ENCODE measurements at regions of chr20 and their contacts with region 1.

Region 1: DNA sequence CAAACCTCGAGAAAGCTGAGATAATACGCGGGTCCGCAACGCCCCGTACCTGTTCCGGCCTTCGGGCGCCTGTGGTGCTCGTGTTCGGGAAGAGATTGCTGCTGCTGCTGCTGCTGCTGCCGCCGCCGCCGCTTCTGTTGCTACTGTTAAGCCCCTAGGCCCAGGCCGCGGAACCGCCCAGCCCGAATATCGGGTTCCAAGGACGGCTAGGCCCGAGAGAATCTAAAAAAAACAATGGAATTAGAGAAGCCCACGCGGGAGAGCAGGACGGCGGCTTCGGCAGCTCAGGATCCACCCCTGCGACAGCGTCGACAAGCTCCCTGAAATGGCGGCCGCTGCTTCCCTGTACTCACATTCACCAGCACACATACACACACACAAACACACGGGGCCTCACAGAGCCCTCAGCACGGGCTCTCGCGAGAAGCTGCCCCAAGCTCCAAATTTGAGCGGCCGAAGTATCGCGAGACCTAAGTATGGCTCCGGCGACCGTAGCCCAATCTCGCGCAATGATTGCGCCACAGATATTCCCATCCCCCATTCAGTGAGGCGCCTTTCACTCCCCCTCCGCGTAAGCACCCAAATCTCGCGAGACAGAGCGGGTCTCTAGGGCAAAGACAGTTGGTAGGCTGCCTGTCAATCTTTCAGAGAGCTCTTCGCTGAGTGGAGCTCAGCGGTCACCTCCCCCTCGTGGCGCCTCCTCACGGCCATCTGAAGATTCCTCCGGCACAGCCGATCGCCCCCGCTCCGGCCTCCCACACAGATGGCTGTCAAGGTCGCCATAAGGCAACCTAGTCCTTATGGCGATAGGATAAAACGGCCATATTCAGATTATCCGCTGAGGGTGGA is at the start of gene RBM39:
- DNase-seq: peak; percentile 93 to 100 (median 100)
- ATAC-seq: peak; percentile 81 to 85
- H3K4me3 Mint-ChIP-seq: peak within 1 kb of the TSS; percentile 93 to 100 (median 99)
- H3K27ac Mint-ChIP-seq: peak within 1 kb of the TSS; percentile 98 to 100 (median 100)
- H3K4me1 Mint-ChIP-seq: peaks cover 27 to 57% (median 50%) of the 10 kb centered on the region in 4 donors
- H3K27me3 Mint-ChIP-seq: no peaks in the 10 kb centered on the region
- polyA plus RNA-seq, gene RBM39: 110 to 134 (median 112) TPM

Region 2: DNA sequence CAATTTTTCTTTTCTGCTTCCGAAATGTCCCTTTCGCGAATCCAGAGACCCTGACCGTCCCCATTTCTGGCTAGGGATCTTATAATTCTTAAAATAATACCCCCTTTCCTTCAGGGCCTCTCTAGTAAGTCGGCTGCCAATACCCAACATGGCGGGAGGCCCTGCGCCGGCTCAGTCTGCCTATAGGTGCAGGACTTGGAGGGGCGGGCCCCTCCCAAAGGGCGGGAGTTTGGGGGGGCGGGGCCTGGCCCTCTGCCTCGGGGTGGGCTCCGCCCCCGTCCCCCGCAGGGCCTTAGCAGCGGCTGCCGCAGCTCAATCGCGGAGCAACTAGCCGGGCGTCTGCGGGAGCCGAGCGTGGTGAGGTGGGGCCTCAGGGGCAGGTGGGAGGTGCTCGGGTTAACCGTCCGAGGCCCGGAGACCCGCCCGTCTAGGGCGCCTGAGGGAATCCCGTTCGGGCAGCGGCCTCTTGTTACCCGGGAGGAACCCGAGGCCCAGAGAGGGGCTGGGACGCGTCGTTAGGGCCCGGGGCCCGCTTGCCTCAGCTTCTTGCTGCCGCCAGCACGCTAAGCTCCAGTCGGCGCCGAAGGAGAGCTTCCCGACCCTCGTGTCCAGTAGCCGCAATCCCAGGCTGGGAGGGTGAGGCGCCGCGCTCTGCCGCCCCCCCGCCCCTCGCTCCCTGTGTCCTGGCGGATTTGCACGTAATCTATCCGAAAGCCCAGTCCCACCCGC is 287.1 kb before region 1 on chr20 and contains the start of gene CEP250:
- POLR2A ChIA-PET with region 1: interaction called, 23 read pairs
- DNase-seq: peak; percentile 91 to 98 (median 96)
- ATAC-seq: peak; percentile 93 to 94
- H3K4me3 Mint-ChIP-seq: peak within 1 kb of the TSS; percentile 88 to 98 (median 95)
- H3K27ac Mint-ChIP-seq: peak within 1 kb of the TSS; percentile 87 to 100 (median 98)
- H3K4me1 Mint-ChIP-seq: peaks cover 0 to 33% (median 21%) of the 10 kb centered on the region in 4 donors
- H3K27me3 Mint-ChIP-seq: no peaks in the 10 kb centered on the region
- polyA plus RNA-seq, gene CEP250: 4.5 to 17.5 (median 6.0) TPM

Region 3: DNA sequence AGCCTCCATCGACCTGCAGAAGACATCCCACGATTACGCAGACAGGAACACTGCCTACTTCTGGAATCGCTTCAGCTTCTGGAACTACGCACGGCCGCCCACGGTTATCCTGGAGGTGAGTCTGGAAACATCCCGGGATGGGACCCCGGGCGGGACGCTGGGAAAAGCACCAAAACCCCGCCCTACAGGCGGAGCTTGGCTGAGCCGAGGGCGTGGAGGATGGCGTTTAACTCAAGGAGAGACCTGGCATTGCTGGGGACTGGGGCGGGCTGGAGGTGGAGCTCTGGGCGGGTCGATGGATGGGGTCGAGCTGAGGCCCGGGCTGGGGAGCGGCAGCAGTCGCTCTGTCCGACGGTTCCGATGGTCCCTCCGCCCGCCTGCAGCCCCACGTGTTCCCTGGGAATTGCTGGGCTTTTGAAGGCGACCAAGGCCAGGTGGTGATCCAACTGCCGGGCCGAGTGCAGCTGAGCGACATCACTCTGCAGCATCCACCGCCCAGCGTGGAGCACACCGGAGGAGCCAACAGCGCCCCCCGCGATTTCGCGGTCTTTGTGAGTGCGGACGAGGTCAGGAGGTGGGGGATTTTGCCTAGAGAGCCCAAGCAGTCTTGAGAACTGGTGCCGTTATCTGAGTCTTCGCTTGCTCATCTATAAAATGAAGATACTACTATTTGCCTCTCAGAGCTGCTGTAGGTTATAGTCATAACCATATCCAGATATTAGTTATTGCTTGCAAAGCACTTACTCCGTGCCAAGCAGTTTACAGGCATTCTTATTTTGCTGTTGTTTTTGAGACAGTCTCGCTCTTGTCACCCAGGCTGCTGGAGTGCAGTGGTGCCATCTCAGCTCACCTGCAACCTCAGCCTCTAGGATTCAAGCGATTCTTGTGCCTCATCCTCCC is 122.7 kb before region 1 on chr20:
- POLR2A ChIA-PET with region 1: interaction called, 20 read pairs
- DNase-seq: peak; percentile 65 to 83 (median 71)
- ATAC-seq: peak; percentile 27 to 33
- H3K4me3 Mint-ChIP-seq: peak overlapping the region; percentile 87 to 93 (median 89)
- H3K27ac Mint-ChIP-seq: peak overlapping the region; percentile 66 to 95 (median 87)
- H3K4me1 Mint-ChIP-seq: peaks cover 16 to 44% (median 39%) of the 10 kb centered on the region in 4 donors
- H3K27me3 Mint-ChIP-seq: no peaks in the 10 kb centered on the region

Region 4: GRCh38 chr20:35648836-35649235 is 93.3 kb before region 1 on chr20:
- POLR2A ChIA-PET with region 1: no interaction called
- DNase-seq: no peak
- ATAC-seq: no peak
- H3K4me3 Mint-ChIP-seq: no peak overlapping the region
- H3K27ac Mint-ChIP-seq: peak overlapping the region in 7 of 10 donors; percentile 4 to 75 (median 34)
- H3K4me1 Mint-ChIP-seq: peaks cover 29 to 76% (median 62%) of the 10 kb centered on the region in 4 donors
- H3K27me3 Mint-ChIP-seq: no peaks in the 10 kb centered on the region

Region 5: GRCh38 chr20:35720165-35721123 is 21.7 kb before region 1 on chr20:
- POLR2A ChIA-PET with region 1: interaction called, 19 read pairs
- DNase-seq: no peak
- ATAC-seq: peak in 1 of 2 donors; percentile 15
- H3K4me3 Mint-ChIP-seq: peak overlapping the region in 4 of 10 donors; percentile 8 to 26 (median 14)
- H3K27ac Mint-ChIP-seq: peak overlapping the region in 9 of 10 donors; percentile 34 to 86 (median 49)
- H3K4me1 Mint-ChIP-seq: peaks cover 24 to 63% (median 49%) of the 10 kb centered on the region in 4 donors
- H3K27me3 Mint-ChIP-seq: no peaks in the 10 kb centered on the region

Region 6: GRCh38 chr20:35796571-35796970 is 54.5 kb after region 1 on chr20:
- POLR2A ChIA-PET with region 1: interaction called, 23 read pairs
- DNase-seq: peak in 6 of 10 donors; percentile 26 to 76 (median 58)
- ATAC-seq: peak; percentile 81 to 95
- H3K4me3 Mint-ChIP-seq: peak overlapping the region; percentile 13 to 79 (median 54)
- H3K27ac Mint-ChIP-seq: peak overlapping the region; percentile 79 to 99 (median 96)
- H3K4me1 Mint-ChIP-seq: peaks cover 12 to 71% (median 56%) of the 10 kb centered on the region in 4 donors
- H3K27me3 Mint-ChIP-seq: no peaks in the 10 kb centered on the region

Region 7: GRCh38 chr20:35954200-35954906 is 212.2 kb after region 1 on chr20 and contains the start of gene SCAND1:
- POLR2A ChIA-PET with region 1: interaction called, 77 read pairs
- DNase-seq: peak; percentile 93 to 99 (median 97)
- ATAC-seq: peak; percentile 86
- H3K4me3 Mint-ChIP-seq: peak within 1 kb of the TSS; percentile 89 to 100 (median 99)
- H3K27ac Mint-ChIP-seq: peak within 1 kb of the TSS; percentile 94 to 100 (median 99)
- H3K4me1 Mint-ChIP-seq: peaks cover 6 to 31% (median 26%) of the 10 kb centered on the region in 4 donors
- H3K27me3 Mint-ChIP-seq: no peaks in the 10 kb centered on the region
- polyA plus RNA-seq, gene SCAND1: 156 to 206 (median 176) TPM

Measured in naive thymus-derived CD8-positive, alpha-beta T cell (primary cell).